Activated CD8-positive, alpha-beta T cell treated with anti-CD3 and anti-CD28 coated beads for 36 hours (primary cell): ENCODE measurements at regions of chr3 and their contacts with region 1.

Region 1: GRCh38 chr3:30611613-30612436 is 5.4 kb downstream of the TGFBR2 start:
- DNase-seq: no peak
- ATAC-seq: peak; percentile 10
- H3K4me3 Mint-ChIP-seq: peak overlapping the region; percentile 88
- H3K27ac Mint-ChIP-seq: peak overlapping the region; percentile 96
- H3K4me1 Mint-ChIP-seq: peaks cover 55% of the 10 kb centered on the region
- H3K27me3 Mint-ChIP-seq: no peaks in the 10 kb centered on the region
- CTCF ChIP-seq: no peak

Region 2: DNA sequence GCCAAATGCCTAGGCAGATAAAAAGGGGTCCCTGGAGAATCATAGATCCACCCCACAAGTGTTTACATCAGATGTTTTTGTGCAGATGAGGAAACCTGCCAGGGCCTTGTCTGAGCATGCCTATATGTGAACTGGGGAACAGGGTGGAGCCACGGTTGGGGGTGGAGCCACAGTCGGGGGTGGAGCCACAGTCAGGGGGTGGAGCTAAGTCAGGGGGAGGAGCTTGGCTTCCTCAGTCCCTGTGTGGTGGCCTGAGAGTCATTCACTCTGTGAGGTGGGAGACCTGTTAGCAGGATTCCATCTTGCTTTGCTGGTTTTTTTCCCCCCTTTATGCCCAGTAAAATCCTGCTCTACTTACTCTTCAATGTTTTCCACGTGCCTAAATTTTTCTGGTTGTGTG is 63.2 kb before region 1 on chr3:
- CTCF ChIA-PET with region 1: no interaction called
- POLR2A ChIA-PET with region 1: no interaction called
- intact Hi-C with region 1: no loop called
- DNase-seq: peak; percentile 32
- ATAC-seq: peak; percentile 90
- H3K4me3 Mint-ChIP-seq: no peak overlapping the region
- H3K27ac Mint-ChIP-seq: no peak overlapping the region
- H3K4me1 Mint-ChIP-seq: peaks cover 31% of the 10 kb centered on the region
- H3K27me3 Mint-ChIP-seq: no peaks in the 10 kb centered on the region
- CTCF ChIP-seq: no peak

Region 3: GRCh38 chr3:30623351-30623750 is 11.5 kb after region 1 on chr3:
- CTCF ChIA-PET with region 1: interaction called, 15 read pairs
- POLR2A ChIA-PET with region 1: interaction called, 107 read pairs
- intact Hi-C with region 1: no loop called
- DNase-seq: peak; percentile 42
- ATAC-seq: peak; percentile 31
- H3K4me3 Mint-ChIP-seq: peak overlapping the region; percentile 63
- H3K27ac Mint-ChIP-seq: peak overlapping the region; percentile 98
- H3K4me1 Mint-ChIP-seq: peaks cover 86% of the 10 kb centered on the region
- H3K27me3 Mint-ChIP-seq: no peaks in the 10 kb centered on the region
- CTCF ChIP-seq: no peak

Region 4: DNA sequence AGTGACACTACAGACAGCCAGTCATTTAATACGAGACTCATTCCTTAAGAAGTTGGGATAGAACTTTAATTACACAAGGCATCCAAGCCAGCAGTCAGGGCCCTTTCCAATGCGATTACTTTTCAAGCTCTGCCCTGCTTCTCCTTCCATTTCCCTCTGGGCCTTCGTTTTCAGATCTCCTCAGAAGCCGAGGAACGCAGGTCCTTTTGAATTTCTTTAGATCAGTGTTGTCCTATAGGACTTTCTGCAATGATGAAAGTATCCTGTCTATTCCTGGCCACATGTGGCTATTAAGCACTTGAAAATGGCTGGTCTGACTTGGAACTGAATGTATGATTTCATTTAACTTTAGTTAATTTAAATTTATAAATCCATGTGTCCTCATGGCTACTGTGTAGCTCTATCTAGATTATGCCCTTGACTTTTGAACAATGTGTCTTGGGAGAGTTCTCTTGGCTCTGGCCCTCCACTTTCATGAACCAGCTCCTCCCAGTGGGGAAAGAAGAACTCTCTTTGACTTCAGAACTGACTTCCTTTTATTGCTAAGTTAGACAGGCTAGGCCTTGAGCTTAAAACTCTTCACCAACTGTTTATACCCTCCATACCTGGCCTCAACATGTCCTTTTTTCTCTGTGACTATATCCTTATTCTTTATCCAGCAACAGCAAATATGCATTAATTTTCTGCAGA is 17.2 kb after region 1 on chr3:
- CTCF ChIA-PET with region 1: interaction called, 6 read pairs
- POLR2A ChIA-PET with region 1: interaction called, 48 read pairs
- intact Hi-C with region 1: no loop called
- DNase-seq: no peak
- ATAC-seq: peak; percentile 12
- H3K4me3 Mint-ChIP-seq: peak overlapping the region; percentile 34
- H3K27ac Mint-ChIP-seq: peak overlapping the region; percentile 98
- H3K4me1 Mint-ChIP-seq: peaks cover 89% of the 10 kb centered on the region
- H3K27me3 Mint-ChIP-seq: no peaks in the 10 kb centered on the region
- CTCF ChIP-seq: no peak

Region 5: GRCh38 chr3:30658328-30659052 is 46.7 kb after region 1 on chr3:
- CTCF ChIA-PET with region 1: interaction called, 5 read pairs
- POLR2A ChIA-PET with region 1: interaction called, 67 read pairs
- intact Hi-C with region 1: no loop called
- DNase-seq: peak; percentile 80
- ATAC-seq: peak; percentile 74
- H3K4me3 Mint-ChIP-seq: peak overlapping the region; percentile 65
- H3K27ac Mint-ChIP-seq: peak overlapping the region; percentile 98
- H3K4me1 Mint-ChIP-seq: peaks cover 100% of the 10 kb centered on the region
- H3K27me3 Mint-ChIP-seq: no peaks in the 10 kb centered on the region
- CTCF ChIP-seq: no peak